SK-N-SH (cell line): ENCODE measurements at regions of chr11 and their contacts with region 1.

Region 1: GRCh38 chr11:36265793-36266628 is 23.2 kb downstream of the COMMD9 start:
- DNase-seq: peak; percentile 81
- H3K4me3 ChIP-seq: no peak overlapping the region; a peak in 1 of 4 replicates
- H3K27ac ChIP-seq: no peak overlapping the region
- H3K4me1 ChIP-seq: peaks cover 0 to 6% of the 10 kb centered on the region in 2 experiments; a peak in 1 of 4 replicates
- H3K27me3 ChIP-seq: no peaks in the 10 kb centered on the region
- CTCF ChIP-seq: peak; percentile 93
- EP300 ChIP-seq: no peak
- RAD21 ChIP-seq: peak; percentile 91

Region 2: GRCh38 chr11:35485656-35486322 is 780.2 kb before region 1 on chr11:
- CTCF ChIA-PET with region 1: interaction called, 20 read pairs
- POLR2A ChIA-PET with region 1: no interaction called
- DNase-seq: peak; percentile 72
- H3K4me3 ChIP-seq: no peak overlapping the region; a peak in 1 of 4 replicates
- H3K27ac ChIP-seq: no peak overlapping the region
- H3K4me1 ChIP-seq: peaks cover 0 to 2% of the 10 kb centered on the region in 2 experiments; a peak in 1 of 4 replicates
- H3K27me3 ChIP-seq: no peaks in the 10 kb centered on the region
- CTCF ChIP-seq: peak; percentile 91
- EP300 ChIP-seq: no peak
- RAD21 ChIP-seq: peak; percentile 79

Region 3: GRCh38 chr11:36009473-36009872 is 256.5 kb before region 1 on chr11:
- CTCF ChIA-PET with region 1: no interaction called
- POLR2A ChIA-PET with region 1: no interaction called
- DNase-seq: no peak
- H3K4me3 ChIP-seq: peak overlapping the region; percentile 9 to 34; a peak in 3 of 4 replicates
- H3K27ac ChIP-seq: peak overlapping the region; percentile 68 to 74
- H3K4me1 ChIP-seq: peaks cover 30 to 40% of the 10 kb centered on the region in 2 experiments
- H3K27me3 ChIP-seq: no peaks in the 10 kb centered on the region
- CTCF ChIP-seq: no peak
- EP300 ChIP-seq: peak in 1 of 2 experiments; percentile 69; a peak in 2 of 4 replicates
- RAD21 ChIP-seq: no peak

Region 4: GRCh38 chr11:36073411-36074203 is 192.4 kb before region 1 on chr11:
- CTCF ChIA-PET with region 1: interaction called, 22 read pairs
- POLR2A ChIA-PET with region 1: no interaction called
- DNase-seq: peak; percentile 69
- H3K4me3 ChIP-seq: no peak overlapping the region
- H3K27ac ChIP-seq: peak overlapping the region in 1 of 2 experiments; percentile 73; a peak in 2 of 4 replicates
- H3K4me1 ChIP-seq: peaks cover 12 to 20% of the 10 kb centered on the region in 2 experiments; a peak in 3 of 4 replicates
- H3K27me3 ChIP-seq: no peaks in the 10 kb centered on the region
- CTCF ChIP-seq: no peak
- EP300 ChIP-seq: peak in 1 of 2 experiments; percentile 61; a peak in 2 of 4 replicates
- RAD21 ChIP-seq: peak; percentile 24; the same call in 1 of the 2 replicates

Region 5: DNA sequence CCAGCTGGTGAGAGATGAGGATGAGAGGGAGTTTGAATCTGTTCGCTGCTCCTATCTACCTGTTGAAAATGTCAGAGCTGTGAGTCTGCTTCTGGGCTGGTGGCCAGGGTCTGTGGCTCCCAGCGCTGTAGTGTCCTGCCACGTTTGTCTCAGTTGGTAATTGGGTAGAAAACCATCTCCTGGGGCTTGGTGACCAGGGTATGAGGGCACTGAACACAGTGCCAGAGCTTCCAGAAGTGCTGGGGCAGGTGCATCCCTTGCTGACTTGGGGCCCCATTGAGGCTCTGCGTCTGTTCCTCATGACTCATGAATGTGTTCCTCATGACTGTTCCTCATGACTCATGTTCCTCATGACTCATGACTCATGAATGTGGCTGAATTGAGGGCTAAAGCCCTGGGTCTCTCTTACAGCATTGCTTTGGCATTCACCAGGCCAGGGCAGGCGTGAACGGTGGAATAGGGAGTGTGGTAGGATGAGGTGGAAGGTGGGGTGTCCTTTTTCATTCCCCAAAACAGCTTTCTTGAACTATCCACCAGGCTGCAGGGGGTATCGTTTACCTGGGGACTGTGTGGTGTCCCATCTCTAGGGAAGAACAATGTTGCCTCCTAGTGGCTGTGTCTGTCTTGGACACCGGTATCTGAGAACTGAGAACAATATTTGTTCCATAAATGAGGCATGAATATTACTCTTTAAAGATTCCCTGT is 116.3 kb before region 1 on chr11:
- CTCF ChIA-PET with region 1: interaction called, 14 read pairs
- POLR2A ChIA-PET with region 1: no interaction called
- DNase-seq: peak; percentile 61
- H3K4me3 ChIP-seq: no peak overlapping the region
- H3K27ac ChIP-seq: peak overlapping the region; percentile 44 to 90; a peak in 3 of 4 replicates
- H3K4me1 ChIP-seq: peaks cover 18 to 19% of the 10 kb centered on the region in 2 experiments; a peak in 3 of 4 replicates
- H3K27me3 ChIP-seq: no peaks in the 10 kb centered on the region
- CTCF ChIP-seq: peak; percentile 75
- EP300 ChIP-seq: peak in 1 of 2 experiments; percentile 97; a peak in 2 of 4 replicates
- RAD21 ChIP-seq: peak; percentile 73

Region 6: GRCh38 chr11:36478700-36479329 is 212.8 kb after region 1 on chr11:
- CTCF ChIA-PET with region 1: interaction called, 14 read pairs
- POLR2A ChIA-PET with region 1: no interaction called
- DNase-seq: peak; percentile 45
- H3K4me3 ChIP-seq: no peak overlapping the region
- H3K27ac ChIP-seq: no peak overlapping the region
- H3K4me1 ChIP-seq: peaks cover 2 to 4% of the 10 kb centered on the region in 2 experiments; a peak in 2 of 4 replicates
- H3K27me3 ChIP-seq: no peaks in the 10 kb centered on the region
- CTCF ChIP-seq: peak; percentile 80
- EP300 ChIP-seq: no peak
- RAD21 ChIP-seq: peak; percentile 90